ENCODE measurements at regions of chr19 and their contacts with region 1.

Region 1: GRCh38 chr19:16771618-16772017 is 52.0 kb downstream of the NWD1 start:
- DNase-seq: peak; percentile 84 to 91
- H3K4me3 ChIP-seq: no peak overlapping the region
- H3K27ac ChIP-seq: no peak overlapping the region
- H3K4me1 ChIP-seq: no peaks in the 10 kb centered on the region
- H3K27me3 ChIP-seq: peaks cover 0 to 24% of the 10 kb centered on the region in 2 donors
- CTCF ChIP-seq: peak; percentile 71 to 86

Region 2: GRCh38 chr19:16678498-16678897 is 93.1 kb before region 1 on chr19:
- intact Hi-C with region 1: no loop called
- DNase-seq: no peak
- H3K4me3 ChIP-seq: no peak overlapping the region
- H3K27ac ChIP-seq: no peak overlapping the region
- H3K4me1 ChIP-seq: no peaks in the 10 kb centered on the region
- H3K27me3 ChIP-seq: no peaks in the 10 kb centered on the region
- CTCF ChIP-seq: no peak

Region 3: GRCh38 chr19:17052439-17053210 is 281.0 kb after region 1 on chr19:
- intact Hi-C with region 1: loop called (anchors 5 kb)
- DNase-seq: peak in 1 of 2 donors; percentile 50
- H3K4me3 ChIP-seq: no peak overlapping the region
- H3K27ac ChIP-seq: no peak overlapping the region
- H3K4me1 ChIP-seq: no peaks in the 10 kb centered on the region
- H3K27me3 ChIP-seq: no peaks in the 10 kb centered on the region
- CTCF ChIP-seq: peak; percentile 53 to 55